Activated naive CD4-positive, alpha-beta T cell treated with anti-CD3 and anti-CD28 coated beads for 36 hours (primary cell): ENCODE measurements at regions of chr11 and their contacts with region 1.

Region 1: DNA sequence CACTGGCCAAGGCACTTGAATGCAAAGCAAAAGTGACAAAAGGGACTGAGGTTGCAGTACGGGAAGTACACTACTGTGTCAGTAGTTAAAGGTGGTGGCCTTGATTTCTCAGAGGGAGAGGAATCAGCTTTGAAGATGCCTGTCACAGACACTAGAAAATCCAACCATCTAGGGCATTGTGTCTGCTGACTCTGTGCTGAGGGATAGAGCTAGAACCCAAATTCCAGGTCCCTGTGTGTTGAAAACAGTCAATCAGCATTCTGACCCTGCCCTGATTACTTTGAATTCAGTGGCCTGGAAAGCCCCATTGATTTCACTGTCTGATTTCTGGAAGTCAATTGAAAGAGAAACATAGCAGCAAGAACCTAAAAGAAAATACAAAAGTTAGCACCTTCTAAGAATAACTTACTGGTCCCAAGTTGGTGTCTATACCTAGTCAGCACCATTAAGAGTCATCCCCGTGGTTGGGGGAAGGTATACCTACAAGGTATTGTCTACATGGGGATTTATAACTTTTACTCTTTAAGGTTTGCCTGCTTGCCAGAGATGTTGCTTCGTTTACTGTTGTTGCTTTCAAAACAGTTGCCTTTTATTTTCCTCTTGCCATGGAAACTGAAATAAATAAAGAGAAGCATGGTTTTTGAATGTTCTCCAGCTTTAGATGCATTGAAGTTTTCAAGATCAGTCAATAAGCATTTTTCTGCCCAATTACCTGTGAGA is 97.3 kb downstream of the PDHX start:
- DNase-seq: peak; percentile 71
- H3K4me3 Mint-ChIP-seq: peak overlapping the region; percentile 39
- H3K27ac Mint-ChIP-seq: peak overlapping the region; percentile 93
- H3K4me1 Mint-ChIP-seq: peaks cover 41% of the 10 kb centered on the region
- H3K27me3 Mint-ChIP-seq: peaks cover 4% of the 10 kb centered on the region

Region 2: DNA sequence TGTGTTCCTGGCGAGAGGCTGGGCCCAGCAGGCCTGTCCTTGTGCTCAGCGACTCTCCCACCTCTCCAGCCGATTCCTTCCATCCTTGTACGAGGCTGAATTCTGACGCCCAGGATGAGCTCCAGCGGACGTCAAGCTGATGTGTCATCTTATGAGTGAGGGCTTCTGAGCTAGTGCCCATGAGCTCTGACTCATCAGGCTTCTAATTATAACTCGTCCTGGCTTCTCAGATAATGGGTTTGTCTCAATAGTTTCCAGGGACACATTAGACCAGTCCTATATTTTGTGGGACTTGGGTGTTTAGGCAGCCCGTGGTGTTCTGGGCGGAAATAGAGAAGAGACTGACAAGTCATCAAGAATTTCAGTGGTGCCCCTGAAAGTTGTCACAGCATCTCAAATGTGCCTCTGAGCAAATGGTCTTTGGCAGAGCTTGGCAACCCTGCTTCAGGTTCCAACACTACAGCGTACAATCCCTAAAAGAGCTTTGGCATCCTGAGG is 17.1 kb after region 1 on chr11:
- CTCF ChIA-PET with region 1: interaction called, 5 read pairs
- intact Hi-C with region 1: loop called (anchors 1 kb)
- DNase-seq: peak; percentile 55
- H3K4me3 Mint-ChIP-seq: peak overlapping the region; percentile 59
- H3K27ac Mint-ChIP-seq: peak overlapping the region; percentile 93
- H3K4me1 Mint-ChIP-seq: peaks cover 44% of the 10 kb centered on the region
- H3K27me3 Mint-ChIP-seq: no peaks in the 10 kb centered on the region

Region 3: DNA sequence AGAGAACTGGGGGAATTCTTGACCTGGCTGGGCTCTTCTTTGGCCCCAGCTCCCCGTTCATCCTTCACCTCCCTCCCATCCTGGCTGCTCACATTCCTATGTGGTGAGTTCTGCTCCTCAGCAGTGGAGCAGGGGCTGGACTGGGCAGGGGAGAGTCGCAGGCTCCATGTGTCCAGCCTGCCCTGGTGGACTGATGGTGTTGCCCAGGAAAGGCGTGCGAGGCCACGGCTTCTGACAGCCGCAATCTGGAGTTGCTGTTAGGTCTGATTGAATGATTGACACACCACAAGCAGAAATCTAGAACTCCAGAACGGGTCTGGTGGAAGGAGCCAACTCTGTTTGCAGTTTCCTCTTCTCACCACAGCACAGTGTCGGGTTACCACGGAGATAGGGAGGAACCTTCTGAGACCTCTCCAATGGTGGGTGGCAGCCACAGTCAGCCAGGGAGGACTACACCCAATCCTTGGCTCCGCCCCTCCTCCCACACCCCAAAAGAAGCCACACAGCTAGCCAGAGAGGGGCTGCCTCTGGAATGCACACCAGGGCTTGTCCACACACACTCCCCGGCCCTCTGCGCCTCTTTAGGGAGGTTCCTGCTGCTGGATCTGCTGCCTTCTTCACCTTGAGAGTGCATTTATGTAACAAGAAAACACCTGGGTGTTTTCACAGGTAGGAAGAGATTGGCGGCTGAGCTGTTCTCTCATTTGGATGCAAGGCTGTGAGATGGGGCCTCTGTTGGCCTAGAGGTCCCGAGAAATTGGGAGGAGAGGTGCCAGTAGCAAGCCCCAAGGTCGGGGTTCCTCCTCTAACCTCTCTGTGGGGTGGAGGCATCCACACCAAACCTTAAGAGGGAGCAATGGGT is 68.9 kb after region 1 on chr11:
- CTCF ChIA-PET with region 1: no interaction called
- intact Hi-C with region 1: loop called (anchors 1 kb)
- DNase-seq: peak; percentile 89
- H3K4me3 Mint-ChIP-seq: peak overlapping the region; percentile 66
- H3K27ac Mint-ChIP-seq: peak overlapping the region; percentile 90
- H3K4me1 Mint-ChIP-seq: peaks cover 91% of the 10 kb centered on the region
- H3K27me3 Mint-ChIP-seq: no peaks in the 10 kb centered on the region

Region 4: DNA sequence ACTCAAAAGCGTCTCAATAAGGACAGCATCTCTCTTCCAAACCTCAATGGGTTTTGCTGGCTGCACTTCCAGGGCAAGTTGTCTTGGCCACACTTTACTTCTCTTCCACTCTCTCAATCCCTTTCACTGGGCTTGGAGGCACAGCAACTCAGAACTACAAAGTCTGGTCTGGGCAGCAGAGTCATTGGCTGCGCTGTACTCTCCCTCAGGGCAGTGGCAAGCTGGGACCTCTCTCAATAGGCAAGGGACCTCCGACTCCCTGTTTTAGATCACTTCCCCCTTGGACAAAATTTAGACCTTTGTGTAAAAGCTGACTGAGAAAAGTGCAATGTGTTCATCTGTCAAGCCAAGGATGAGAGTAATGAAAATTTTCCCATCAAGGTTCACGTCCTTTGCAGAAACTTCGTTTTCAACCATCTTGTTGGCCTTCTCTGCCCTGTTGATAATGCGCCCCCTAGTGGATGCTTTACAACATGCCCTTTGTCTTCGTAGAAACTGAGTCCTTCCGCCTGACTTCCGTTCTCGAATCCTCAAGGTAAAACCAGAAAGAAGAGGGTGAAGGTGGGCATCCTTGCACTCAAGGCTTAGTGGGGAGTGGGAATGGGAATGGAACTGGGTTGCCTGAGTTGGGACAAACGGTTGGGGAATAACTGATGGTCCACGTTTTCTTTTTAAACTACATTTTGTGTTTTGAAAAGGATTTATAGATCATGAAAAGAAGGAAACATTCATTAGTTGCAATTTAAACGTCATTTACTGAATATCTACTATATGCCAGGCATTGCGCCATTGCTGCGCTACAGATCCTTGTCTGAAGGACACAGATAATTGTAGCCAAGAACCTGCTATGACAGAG is 224.4 kb after region 1 on chr11:
- CTCF ChIA-PET with region 1: no interaction called
- intact Hi-C with region 1: loop called (anchors 1 kb)
- DNase-seq: peak; percentile 79
- H3K4me3 Mint-ChIP-seq: no peak overlapping the region
- H3K27ac Mint-ChIP-seq: peak overlapping the region; percentile 34
- H3K4me1 Mint-ChIP-seq: peaks cover 69% of the 10 kb centered on the region
- H3K27me3 Mint-ChIP-seq: no peaks in the 10 kb centered on the region

Region 5: DNA sequence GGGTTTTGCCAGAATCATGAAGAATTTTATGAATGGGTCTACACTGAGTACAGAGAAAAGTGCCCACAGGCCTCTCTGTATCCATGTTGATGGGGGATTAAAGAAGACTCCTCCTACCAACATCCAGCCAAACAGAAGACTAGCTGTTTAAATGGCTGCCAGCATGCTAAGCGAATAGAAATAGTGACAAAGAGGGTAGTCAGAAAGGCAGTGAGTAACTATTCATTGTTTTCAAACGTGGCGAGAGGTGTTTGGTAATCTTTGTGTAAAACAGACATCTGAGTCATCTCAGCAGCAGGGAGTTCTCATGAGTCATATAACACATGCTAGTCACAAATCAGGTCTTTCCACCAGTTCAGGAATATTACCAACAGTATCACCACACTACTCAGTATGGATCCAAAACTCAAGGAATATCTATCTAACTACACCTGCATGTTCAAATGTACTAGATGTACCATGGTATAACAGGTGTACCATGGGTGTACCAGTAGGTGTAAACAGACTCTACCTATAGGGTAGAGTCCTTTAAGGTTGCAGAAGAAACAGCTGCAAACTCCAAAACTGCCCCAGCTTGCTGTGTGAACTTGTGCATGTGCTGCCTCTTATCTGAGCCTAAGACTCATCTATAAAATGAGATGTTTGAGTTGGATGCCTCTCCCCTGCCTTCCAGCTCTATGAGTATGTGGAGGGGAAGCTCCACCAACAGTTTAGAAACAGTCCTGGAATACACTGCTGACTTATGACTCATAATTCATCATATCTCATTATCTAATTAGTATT is 323.7 kb after region 1 on chr11:
- CTCF ChIA-PET with region 1: interaction called, 3 read pairs
- intact Hi-C with region 1: loop called (anchors 1 kb)
- DNase-seq: peak; percentile 65
- H3K4me3 Mint-ChIP-seq: no peak overlapping the region
- H3K27ac Mint-ChIP-seq: peak overlapping the region; percentile 82
- H3K4me1 Mint-ChIP-seq: peaks cover 41% of the 10 kb centered on the region
- H3K27me3 Mint-ChIP-seq: no peaks in the 10 kb centered on the region